Posterior cingulate gyrus (tissue), 11 donors: ENCODE measurements at regions of chr2 and their contacts with region 1.

Region 1: DNA sequence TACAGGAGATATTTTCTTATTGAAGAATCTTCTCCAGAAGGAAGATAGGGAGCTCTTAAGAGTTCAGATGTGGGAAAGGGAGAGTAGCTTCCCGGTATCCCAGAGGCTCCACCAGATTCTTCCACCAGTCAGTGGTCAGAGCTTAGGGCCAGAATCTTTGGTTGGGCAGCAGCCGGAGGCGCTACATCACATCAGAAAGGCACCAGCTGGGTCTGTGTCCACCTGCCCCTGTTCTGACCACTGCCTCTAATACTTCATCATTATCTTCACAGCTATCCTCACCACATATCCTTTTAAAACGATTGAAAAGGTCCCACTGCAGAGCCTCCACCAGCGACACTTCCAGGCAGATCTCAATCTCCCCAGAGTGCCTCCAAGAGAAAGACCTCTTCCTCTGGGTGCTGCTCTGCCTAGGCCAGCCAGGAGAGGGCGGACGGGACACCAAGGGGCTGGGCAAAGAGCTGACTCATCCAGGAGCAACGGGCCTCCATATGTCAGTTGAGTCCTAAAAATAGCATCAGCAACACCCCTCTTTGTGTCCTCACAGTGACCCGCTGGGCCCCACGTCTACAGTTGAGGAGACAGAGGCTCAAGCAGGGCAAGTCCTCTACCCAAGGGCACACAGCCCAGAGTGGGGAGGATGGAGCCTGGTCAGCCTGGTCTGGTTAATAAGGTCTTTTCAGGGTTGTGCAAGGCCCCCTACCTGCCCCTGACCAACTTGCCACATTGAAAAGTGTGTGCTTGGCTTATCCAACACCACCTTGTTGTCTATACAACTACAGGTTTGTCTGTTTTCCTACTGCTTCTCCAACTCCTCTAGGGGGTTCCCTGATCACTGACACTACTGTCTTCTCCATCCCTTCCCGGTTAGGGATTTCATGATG is 81.2 kb downstream of the ADD2 start:
- DNase-seq: peak in 4 of 10 donors; percentile 37 to 89 (median 65)

Region 2: DNA sequence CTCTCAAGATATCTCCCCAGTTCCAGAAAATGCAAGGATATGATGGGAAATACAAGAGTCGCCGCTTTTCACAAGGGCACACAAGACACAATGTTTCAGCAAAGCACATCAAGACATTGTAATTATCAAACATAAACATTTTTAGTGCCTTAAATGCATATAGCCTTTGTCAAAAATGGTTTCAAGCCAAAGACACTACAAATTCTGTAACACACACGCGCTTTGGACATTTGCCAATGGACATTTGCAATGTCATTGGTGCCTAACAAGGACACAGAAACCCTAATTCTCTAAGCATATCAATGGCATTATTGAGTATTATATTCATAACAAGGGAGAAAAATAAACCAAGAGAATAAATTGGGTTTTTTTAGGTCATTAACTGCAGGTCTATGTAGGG is 65.1 kb after region 1 on chr2:
- intact Hi-C with region 1: loop called (anchors 10 kb)
- DNase-seq: no peak